ENCODE measurements at regions of chr14 and their contacts with region 1.

Region 1: DNA sequence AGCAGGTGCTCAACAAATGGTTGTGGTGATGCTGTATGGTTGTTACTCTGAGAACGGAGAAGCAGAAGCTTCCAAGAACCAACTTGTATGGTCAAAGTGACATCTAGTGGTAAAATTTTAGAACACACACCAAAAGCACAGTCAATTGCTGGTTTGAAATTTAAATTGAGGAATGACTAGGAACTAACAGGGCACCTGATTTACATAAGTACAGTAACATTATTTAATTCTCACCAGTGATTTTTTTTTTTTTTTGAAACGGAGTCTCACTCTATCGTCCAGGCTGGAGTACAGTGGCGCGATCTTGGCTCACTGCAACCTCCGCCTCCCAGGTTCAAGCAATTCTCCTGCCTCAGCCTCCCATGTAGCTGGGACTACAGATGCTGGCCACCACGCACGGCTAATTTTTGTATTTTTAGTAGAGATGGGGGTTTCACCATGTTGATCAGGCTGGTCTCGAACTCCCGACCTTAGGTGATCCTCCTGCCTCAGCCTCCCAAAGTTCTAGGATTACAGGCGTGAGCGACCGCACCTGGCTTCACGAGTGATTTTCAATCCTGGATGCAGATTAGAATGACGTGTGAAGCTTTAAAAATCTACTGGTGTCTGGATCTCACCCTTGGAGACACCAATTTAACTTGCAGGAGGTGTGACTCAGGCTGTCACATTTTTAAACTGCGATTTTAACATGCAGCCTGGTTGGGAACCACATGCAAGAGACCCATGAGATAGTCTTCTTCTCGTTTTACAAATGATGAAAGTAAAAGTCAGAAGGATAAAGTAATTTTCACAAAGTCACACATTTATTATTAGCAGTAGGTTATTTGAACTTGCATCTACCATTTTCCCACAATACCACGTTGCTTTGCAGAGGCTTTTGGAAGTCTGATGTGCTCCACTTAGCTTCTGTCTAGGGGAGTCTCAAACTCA is 14.1 kb upstream of the NUMB start:
- DNase-seq: no peak
- ATAC-seq: peak; percentile 81
- H3K4me3 Mint-ChIP-seq: no peak overlapping the region
- H3K27ac Mint-ChIP-seq: no peak overlapping the region
- H3K4me1 Mint-ChIP-seq: peaks cover 7% of the 10 kb centered on the region
- H3K27me3 Mint-ChIP-seq: no peaks in the 10 kb centered on the region

Region 2: GRCh38 chr14:73173092-73173735 is 299.2 kb before region 1 on chr14:
- CTCF ChIA-PET with region 1: interaction called, 24 read pairs
- DNase-seq: peak; percentile 42
- ATAC-seq: no peak
- H3K4me3 Mint-ChIP-seq: no peak overlapping the region
- H3K27ac Mint-ChIP-seq: no peak overlapping the region
- H3K4me1 Mint-ChIP-seq: peaks cover 3% of the 10 kb centered on the region
- H3K27me3 Mint-ChIP-seq: no peaks in the 10 kb centered on the region